ENCODE measurements at regions of chr1 and their contacts with region 1.

Region 1: DNA sequence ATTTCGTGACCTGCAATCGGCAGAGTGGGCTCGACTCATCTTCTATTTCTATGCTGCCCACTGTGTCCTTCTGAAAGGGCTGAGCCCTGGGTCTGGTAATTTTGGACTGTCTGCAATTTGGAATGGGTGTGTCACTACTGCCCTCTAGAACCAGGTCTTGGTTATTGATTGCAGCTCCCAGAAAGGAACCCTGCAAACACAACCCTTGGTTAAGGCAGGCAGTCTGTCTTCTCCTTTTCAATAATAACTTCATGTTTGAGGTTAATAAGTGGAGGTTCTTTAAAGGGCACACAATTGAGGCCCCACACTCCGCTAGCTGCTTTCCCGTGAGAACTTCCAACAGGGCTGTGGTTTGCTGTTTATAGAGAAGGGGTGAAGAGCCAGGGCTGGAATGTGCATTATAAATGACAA is 79.9 kb upstream of the LYST start:
- DNase-seq: no peak
- CTCF ChIP-seq: peak; percentile 60

Region 2: GRCh38 chr1:234102583-234102982 is 1844.0 kb before region 1 on chr1:
- in situ Hi-C with region 1: no loop called
- DNase-seq: no peak
- CTCF ChIP-seq: no peak

Region 3: DNA sequence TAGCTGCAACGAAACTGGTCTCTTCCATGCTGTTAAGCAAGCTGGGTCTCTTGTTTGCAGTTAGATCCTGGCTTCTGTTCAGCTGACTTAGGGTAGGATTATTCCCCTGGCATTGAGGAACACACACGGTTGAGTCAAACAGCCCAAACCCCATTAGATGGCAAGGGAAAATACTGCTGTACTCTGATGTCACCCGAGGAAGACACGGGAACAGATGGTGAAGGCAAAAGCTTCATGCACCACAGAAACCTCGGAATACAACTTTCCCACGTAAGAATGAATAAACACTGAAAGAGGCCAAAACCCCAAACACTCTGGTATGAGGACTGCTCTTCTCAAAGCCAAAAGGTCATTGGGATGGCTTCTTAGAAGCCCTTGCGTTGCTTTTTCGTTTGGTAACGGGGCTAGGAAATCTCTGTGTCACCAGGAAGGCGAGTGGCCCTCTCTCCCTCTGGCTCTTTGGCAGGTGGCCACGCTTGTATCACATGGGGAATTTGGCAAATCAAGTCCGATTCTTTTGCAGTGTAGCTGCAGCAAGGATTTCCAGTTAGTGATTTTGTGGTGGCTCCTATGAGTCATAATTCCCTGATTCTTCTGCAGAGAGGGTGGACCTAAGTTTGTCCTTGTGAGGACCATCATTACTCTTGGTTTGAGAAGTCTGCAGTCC is 63.2 kb before region 1 on chr1:
- in situ Hi-C with region 1: loop called (anchors 10 kb)
- DNase-seq: no peak
- CTCF ChIP-seq: no peak